H1 (cell line): ENCODE measurements at regions of chr10 and their contacts with region 1.

Region 1: GRCh38 chr10:26534384-26534783 is 96.2 kb downstream of the APBB1IP start:
- DNase-seq: peak; percentile 44 to 75
- H3K4me3 ChIP-seq: no peak overlapping the region
- H3K27ac ChIP-seq: no peak overlapping the region
- H3K4me1 ChIP-seq: no peaks in the 10 kb centered on the region
- H3K27me3 ChIP-seq: no peaks in the 10 kb centered on the region
- CTCF ChIP-seq: peak; percentile 71 to 83 (median 77)
- EP300 ChIP-seq: no peak
- POLR2A ChIP-seq: no peak
- RAD21 ChIP-seq: peak; percentile 47 to 60; a peak in 3 of 4 replicates

Region 2: GRCh38 chr10:26460736-26461135 is 73.6 kb before region 1 on chr10:
- CTCF ChIA-PET with region 1: no interaction called
- POLR2A ChIA-PET with region 1: no interaction called
- DNase-seq: no peak
- H3K4me3 ChIP-seq: no peak overlapping the region
- H3K27ac ChIP-seq: no peak overlapping the region
- H3K4me1 ChIP-seq: no peaks in the 10 kb centered on the region
- H3K27me3 ChIP-seq: no peaks in the 10 kb centered on the region
- CTCF ChIP-seq: no peak
- EP300 ChIP-seq: no peak
- POLR2A ChIP-seq: no peak
- RAD21 ChIP-seq: no peak

Region 3: GRCh38 chr10:26503911-26504310 is 30.5 kb before region 1 on chr10:
- CTCF ChIA-PET with region 1: interaction called, 11 read pairs
- POLR2A ChIA-PET with region 1: no interaction called
- DNase-seq: peak in 1 of 2 experiments; percentile 55
- H3K4me3 ChIP-seq: no peak overlapping the region
- H3K27ac ChIP-seq: no peak overlapping the region
- H3K4me1 ChIP-seq: no peaks in the 10 kb centered on the region
- H3K27me3 ChIP-seq: no peaks in the 10 kb centered on the region
- CTCF ChIP-seq: peak; percentile 57 to 63 (median 60)
- EP300 ChIP-seq: no peak
- POLR2A ChIP-seq: no peak
- RAD21 ChIP-seq: peak; percentile 35 to 49

Region 4: GRCh38 chr10:26516540-26517101 is 17.8 kb before region 1 on chr10:
- CTCF ChIA-PET with region 1: interaction called, 15 read pairs
- POLR2A ChIA-PET with region 1: no interaction called
- DNase-seq: peak in 1 of 2 experiments; percentile 50
- H3K4me3 ChIP-seq: peak overlapping the region in 1 of 4 experiments; percentile 29; a peak in 1 of 8 replicates
- H3K27ac ChIP-seq: no peak overlapping the region
- H3K4me1 ChIP-seq: peaks cover 4 to 10% (median 7%) of the 10 kb centered on the region in 4 experiments; a peak in 5 of 7 replicates
- H3K27me3 ChIP-seq: no peaks in the 10 kb centered on the region
- CTCF ChIP-seq: no peak
- EP300 ChIP-seq: no peak
- POLR2A ChIP-seq: no peak
- RAD21 ChIP-seq: no peak

Region 5: GRCh38 chr10:26524161-26524831 is 10.1 kb before region 1 on chr10:
- CTCF ChIA-PET with region 1: interaction called, 11 read pairs
- POLR2A ChIA-PET with region 1: no interaction called
- DNase-seq: no peak
- H3K4me3 ChIP-seq: no peak overlapping the region
- H3K27ac ChIP-seq: no peak overlapping the region
- H3K4me1 ChIP-seq: no peaks in the 10 kb centered on the region
- H3K27me3 ChIP-seq: no peaks in the 10 kb centered on the region
- CTCF ChIP-seq: no peak
- EP300 ChIP-seq: no peak
- POLR2A ChIP-seq: no peak
- RAD21 ChIP-seq: no peak

Region 6: GRCh38 chr10:26790221-26790995 is 256.0 kb after region 1 on chr10:
- CTCF ChIA-PET with region 1: no interaction called
- POLR2A ChIA-PET with region 1: no interaction called
- DNase-seq: no peak
- H3K4me3 ChIP-seq: no peak overlapping the region
- H3K27ac ChIP-seq: no peak overlapping the region
- H3K4me1 ChIP-seq: no peaks in the 10 kb centered on the region
- H3K27me3 ChIP-seq: no peaks in the 10 kb centered on the region
- CTCF ChIP-seq: no peak
- EP300 ChIP-seq: no peak
- POLR2A ChIP-seq: no peak
- RAD21 ChIP-seq: no peak